ENCODE measurements at regions of chr6 and their contacts with region 1.

Region 1: GRCh38 chr6:2127484-2127911 is 117.9 kb downstream of the GMDS start:
- DNase-seq: peak; percentile 74 to 82
- H3K4me3 ChIP-seq: no peak overlapping the region
- H3K27ac ChIP-seq: peak overlapping the region; percentile 48 to 64
- H3K4me1 ChIP-seq: peaks cover 0 to 18% (median 0%) of the 10 kb centered on the region in 4 donors
- H3K27me3 ChIP-seq: no peaks in the 10 kb centered on the region
- CTCF ChIP-seq: no peak

Region 2: DNA sequence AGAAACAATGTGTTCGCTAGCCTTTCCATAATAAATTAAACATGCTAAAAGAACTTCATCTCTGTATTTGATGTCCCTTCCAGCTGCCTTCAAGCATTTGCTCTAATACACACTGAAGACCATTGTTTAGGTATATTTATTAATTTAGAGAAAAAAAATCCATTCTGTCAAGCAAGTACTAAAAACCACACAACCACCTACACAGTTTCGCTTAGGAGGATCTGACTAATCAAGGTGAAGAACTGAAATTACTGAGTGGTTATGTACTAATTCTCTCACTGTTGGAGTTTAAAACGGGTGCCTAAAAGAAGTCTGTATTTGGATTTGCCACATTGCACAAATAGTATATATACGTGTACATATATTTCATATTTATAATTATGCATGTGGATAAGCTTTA is 59.0 kb after region 1 on chr6:
- intact Hi-C with region 1: loop called (anchors 10 kb)
- DNase-seq: no peak
- H3K4me3 ChIP-seq: no peak overlapping the region
- H3K27ac ChIP-seq: no peak overlapping the region
- H3K4me1 ChIP-seq: peaks cover 0 to 6% (median 0%) of the 10 kb centered on the region in 4 donors
- H3K27me3 ChIP-seq: no peaks in the 10 kb centered on the region
- CTCF ChIP-seq: no peak

Region 3: GRCh38 chr6:2381872-2382661 is 254.6 kb after region 1 on chr6:
- intact Hi-C with region 1: no loop called
- DNase-seq: no peak
- H3K4me3 ChIP-seq: peak overlapping the region; percentile 12 to 30
- H3K27ac ChIP-seq: peak overlapping the region; percentile 61 to 68
- H3K4me1 ChIP-seq: peaks cover 0 to 37% (median 1%) of the 10 kb centered on the region in 4 donors
- H3K27me3 ChIP-seq: no peaks in the 10 kb centered on the region
- CTCF ChIP-seq: no peak